ENCODE measurements at regions of chr10 and their contacts with region 1.

Region 1: DNA sequence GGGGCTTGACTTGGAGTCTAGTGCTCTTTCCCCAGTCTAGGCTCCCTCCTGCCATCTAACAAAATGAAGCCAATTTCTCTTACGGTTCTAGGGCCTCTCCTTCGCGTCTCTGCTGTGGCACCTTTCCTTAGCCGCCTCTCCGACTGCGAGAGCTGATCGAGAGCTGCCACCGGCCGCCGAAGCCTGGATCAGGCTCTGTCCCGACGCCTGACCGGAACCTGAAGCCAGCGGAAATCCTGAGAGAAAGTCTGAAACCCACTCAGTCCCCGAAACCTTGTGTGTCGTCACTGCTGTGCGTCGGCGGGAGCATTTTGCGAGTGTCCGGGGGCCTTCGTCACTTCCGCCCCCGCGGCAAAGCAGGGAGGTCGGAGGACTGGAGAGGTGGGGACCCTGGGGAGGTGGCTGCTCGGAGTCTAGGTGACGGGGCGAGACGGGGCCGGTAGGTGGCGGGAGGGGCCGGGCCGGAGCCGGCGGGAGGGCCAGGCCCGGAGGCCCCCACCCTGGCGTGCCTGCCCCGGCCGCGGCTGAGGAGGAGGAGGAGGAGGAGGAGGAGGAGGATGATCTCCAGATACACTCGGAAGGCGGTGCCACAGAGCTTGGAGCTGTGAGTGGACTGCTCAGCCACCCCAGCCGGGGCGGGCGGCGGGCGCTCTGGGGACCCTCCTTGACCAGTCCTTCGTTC is at the starts of genes ECD and FAM149B1:
- DNase-seq: peak; percentile 84 to 97
- H3K4me3 ChIP-seq: peak within 1 kb of the TSS; percentile 82 to 88
- H3K27ac ChIP-seq: peak within 1 kb of the TSS; percentile 96 to 97
- H3K4me1 ChIP-seq: peaks cover 0 to 19% of the 10 kb centered on the region in 2 donors
- H3K27me3 ChIP-seq: no peaks in the 10 kb centered on the region
- CTCF ChIP-seq: peak in 2 of 3 experiments; percentile 30 to 49
- total RNA-seq, gene ECD: 6.2 TPM
- total RNA-seq, gene FAM149B1: 19.4 TPM

Region 2: DNA sequence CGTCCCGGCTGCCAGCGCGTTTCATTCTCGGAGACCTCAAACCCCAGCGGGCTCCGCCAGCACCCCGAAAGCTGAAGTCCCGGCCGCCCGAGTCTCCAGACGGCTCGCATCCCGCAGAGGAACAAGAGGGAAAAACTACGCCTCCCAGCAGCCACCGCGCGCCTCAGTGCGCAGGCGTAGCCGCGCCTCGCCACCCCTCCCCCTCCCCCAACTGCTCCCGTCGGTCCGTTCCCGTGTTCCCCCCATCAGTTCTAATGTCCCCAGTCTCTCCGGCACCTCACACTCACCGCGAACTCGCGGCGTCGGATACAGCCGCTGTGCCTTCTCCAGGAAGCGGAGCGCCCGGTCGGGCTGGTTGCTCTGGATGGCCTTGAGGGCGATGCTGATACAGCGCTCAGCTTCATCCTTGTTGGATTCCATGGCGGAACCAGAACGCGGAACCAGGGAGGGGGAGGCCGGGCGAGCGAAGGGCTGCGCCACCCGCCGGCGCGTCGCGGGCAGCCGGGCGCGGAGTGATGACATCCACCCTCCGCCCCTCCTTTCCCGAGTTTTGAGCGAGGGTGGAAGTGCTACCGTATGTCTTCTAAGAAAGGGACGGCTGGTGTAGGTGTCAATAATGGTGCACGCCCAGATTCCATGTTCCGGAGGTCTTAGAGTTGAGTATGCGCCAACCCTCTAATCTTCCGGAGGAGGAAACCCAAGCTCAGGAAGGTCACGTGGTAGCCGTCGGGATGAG is 813.3 kb before region 1 on chr10 and contains the start of gene DNAJB12:
- intact Hi-C with region 1: loop called (anchors 10 kb)
- DNase-seq: peak; percentile 68 to 94
- H3K4me3 ChIP-seq: peak within 1 kb of the TSS; percentile 96
- H3K27ac ChIP-seq: peak within 1 kb of the TSS; percentile 98
- H3K4me1 ChIP-seq: peaks cover 10 to 14% of the 10 kb centered on the region in 2 donors
- H3K27me3 ChIP-seq: no peaks in the 10 kb centered on the region
- CTCF ChIP-seq: no peak
- total RNA-seq, gene DNAJB12: 46.1 TPM

Region 3: DNA sequence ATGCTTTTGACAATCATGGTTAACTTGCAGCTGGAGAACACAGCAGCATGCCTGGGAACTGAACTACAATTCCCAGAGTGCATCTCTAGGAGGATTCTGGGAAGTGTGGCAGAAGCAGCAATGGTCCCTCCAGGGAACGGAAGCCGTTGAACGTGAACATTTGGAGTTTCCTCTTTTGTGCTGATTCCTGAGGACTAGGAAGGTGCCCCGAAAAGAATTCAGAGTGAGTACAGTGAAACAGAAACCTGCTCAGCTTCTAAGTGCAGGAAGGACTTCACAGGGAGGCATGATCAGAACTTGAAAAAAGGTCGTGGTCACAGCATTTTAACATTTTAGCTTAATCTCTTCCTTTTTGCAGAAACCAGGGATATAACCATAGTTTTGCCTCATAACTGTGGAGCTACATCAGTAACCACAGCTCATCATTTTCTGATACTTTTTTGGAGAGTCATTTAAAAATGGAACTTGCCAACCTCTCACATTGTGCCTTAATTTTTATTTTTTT is 57.5 kb before region 1 on chr10 and contains the start of gene NUDT13:
- intact Hi-C with region 1: loop called (anchors 5 kb)
- DNase-seq: peak in 1 of 2 donors; percentile 88
- H3K4me3 ChIP-seq: peak within 1 kb of the TSS; percentile 63 to 66
- H3K27ac ChIP-seq: peak within 1 kb of the TSS; percentile 81 to 88
- H3K4me1 ChIP-seq: no peaks in the 10 kb centered on the region
- H3K27me3 ChIP-seq: no peaks in the 10 kb centered on the region
- CTCF ChIP-seq: no peak
- total RNA-seq, gene NUDT13: 7.6 TPM

Region 4: GRCh38 chr10:73131301-73131700 is 36.6 kb before region 1 on chr10:
- intact Hi-C with region 1: no loop called
- DNase-seq: no peak
- H3K4me3 ChIP-seq: no peak overlapping the region
- H3K27ac ChIP-seq: no peak overlapping the region
- H3K4me1 ChIP-seq: no peaks in the 10 kb centered on the region
- H3K27me3 ChIP-seq: no peaks in the 10 kb centered on the region
- CTCF ChIP-seq: no peak

Measured in ascending aorta (tissue), 2 donors.